CD14-positive monocyte (primary cell): ENCODE measurements at regions of chr5 and their contacts with region 1.

Region 1: GRCh38 chr5:139262742-139263445 is 30.6 kb upstream of the MATR3 start:
- DNase-seq: peak; percentile 73 to 84 (median 80)
- H3K4me3 ChIP-seq: no peak overlapping the region
- H3K4me3 Mint-ChIP-seq: no peak overlapping the region
- H3K27ac ChIP-seq: no peak overlapping the region
- H3K27ac Mint-ChIP-seq: no peak overlapping the region
- H3K4me1 ChIP-seq: no peaks in the 10 kb centered on the region
- H3K4me1 Mint-ChIP-seq: peaks cover 3% of the 10 kb centered on the region
- H3K27me3 ChIP-seq: no peaks in the 10 kb centered on the region
- H3K27me3 Mint-ChIP-seq: peaks cover 2 to 6% (median 3%) of the 10 kb centered on the region in 3 donors
- CTCF ChIP-seq: peak; percentile 89

Region 2: DNA sequence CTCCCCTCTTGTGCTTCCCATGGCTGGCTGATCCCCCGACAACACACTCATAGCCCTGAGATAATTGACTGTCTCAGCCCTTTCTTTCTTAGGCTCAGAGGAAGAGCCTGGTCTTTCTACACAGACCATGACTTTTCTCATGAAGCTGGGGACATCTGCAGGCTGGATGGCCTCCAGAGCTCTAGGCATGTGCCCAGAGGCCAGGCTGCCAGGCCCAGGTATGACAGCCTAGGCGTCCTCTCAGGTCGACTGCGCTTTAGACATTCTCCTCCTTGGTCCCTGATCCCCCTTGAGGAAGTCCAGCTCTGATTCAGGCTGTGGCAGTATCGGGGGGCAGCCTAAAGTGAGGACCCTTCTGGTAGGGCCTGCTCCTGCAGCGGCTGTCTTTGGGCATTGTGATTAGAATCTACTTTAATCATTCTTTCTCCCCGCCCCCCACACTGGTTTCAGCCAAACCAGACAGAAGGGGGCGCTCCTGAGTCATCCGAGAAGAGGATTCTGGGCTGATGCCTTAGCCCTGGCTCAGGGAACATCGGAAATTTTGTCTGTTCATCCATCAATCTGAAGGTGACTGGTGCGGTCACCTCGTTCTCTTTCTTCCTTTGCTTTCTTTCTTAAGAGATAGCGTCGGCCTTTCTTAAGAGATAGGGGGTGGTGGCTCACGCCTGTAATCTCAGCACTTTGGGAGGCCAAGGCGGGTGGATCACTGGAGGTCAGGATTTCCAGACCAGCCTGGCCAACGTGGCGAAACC is 621.2 kb before region 1 on chr5:
- intact Hi-C with region 1: loop called (anchors 2 to 10 kb)
- DNase-seq: peak; percentile 44 to 60 (median 52)
- H3K4me3 ChIP-seq: no peak overlapping the region
- H3K4me3 Mint-ChIP-seq: no peak overlapping the region
- H3K27ac ChIP-seq: no peak overlapping the region
- H3K27ac Mint-ChIP-seq: no peak overlapping the region
- H3K4me1 ChIP-seq: no peaks in the 10 kb centered on the region
- H3K4me1 Mint-ChIP-seq: peaks cover 2% of the 10 kb centered on the region
- H3K27me3 ChIP-seq: no peaks in the 10 kb centered on the region
- H3K27me3 Mint-ChIP-seq: peaks cover 4 to 16% (median 12%) of the 10 kb centered on the region in 3 donors
- CTCF ChIP-seq: peak; percentile 82